ENCODE measurements at regions of chr5 and their contacts with region 1.

Region 1: DNA sequence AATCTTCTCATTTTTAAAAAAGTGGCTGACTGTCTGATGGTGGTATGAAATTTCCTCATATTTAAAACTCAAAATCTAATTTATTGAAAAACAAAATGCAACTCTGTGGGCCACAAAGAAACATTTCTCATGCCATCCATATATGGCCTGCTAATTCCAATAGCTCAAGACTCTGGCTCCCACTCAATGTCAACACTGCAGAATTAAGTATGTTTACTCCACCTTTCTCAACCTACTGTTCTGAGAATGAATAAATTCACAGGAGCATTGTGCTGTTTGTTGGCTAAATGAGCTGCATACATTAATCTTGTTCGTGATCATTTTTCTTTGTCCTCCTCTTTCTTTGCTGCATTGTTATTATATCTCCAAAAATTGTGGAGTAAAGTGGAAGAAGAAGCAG is 79.5 kb upstream of the GABRG2 start:
- DNase-seq: no peak
- H3K4me3 ChIP-seq: no peak overlapping the region
- H3K27ac ChIP-seq: no peak overlapping the region
- H3K4me1 ChIP-seq: no peaks in the 10 kb centered on the region
- CTCF ChIP-seq: no peak

Region 2: DNA sequence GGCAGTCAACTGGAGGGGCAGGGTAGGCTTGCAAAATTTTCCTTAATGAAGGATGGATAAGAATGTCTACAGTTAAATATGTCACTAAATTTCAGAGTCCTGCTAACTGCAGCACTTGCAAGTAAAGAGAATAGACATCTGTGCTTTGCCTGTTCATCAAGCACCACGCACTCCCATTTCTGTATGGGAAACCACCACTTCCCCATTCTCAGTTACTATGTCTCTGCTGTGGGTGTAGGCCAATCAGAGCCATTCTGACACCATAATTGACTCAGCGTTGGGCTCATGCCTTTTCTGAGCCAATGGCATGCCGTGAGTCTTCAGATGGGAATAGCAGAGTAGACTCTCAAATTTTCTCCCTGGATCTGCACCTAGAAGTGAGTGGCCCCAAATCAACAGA is 689.0 kb before region 1 on chr5:
- CTCF ChIA-PET with region 1: no interaction called
- POLR2A ChIA-PET with region 1: no interaction called
- intact Hi-C with region 1: no loop called
- DNase-seq: no peak
- H3K4me3 ChIP-seq: no peak overlapping the region
- H3K27ac ChIP-seq: no peak overlapping the region
- H3K4me1 ChIP-seq: no peaks in the 10 kb centered on the region
- CTCF ChIP-seq: no peak

Region 3: DNA sequence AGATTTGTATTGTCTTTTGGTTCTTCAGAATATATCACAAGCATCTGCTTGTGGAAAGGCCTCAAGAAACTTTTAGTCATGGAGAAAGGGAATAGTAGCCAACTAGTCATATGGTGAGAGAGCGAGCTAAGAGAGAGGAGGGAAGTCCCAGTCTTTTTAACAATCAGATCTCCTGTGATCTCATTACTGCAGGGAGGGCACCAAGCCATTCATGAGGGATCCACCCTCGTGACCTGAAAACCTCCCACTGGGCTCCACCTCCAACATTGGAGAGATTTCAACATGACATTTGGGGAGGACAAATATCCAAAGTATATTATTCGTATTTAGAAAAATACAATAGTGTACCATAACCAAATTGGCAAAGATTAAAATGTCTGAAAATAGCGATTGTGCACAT is 41.2 kb before region 1 on chr5:
- CTCF ChIA-PET with region 1: no interaction called
- POLR2A ChIA-PET with region 1: no interaction called
- intact Hi-C with region 1: no loop called
- DNase-seq: no peak
- H3K4me3 ChIP-seq: no peak overlapping the region
- H3K27ac ChIP-seq: no peak overlapping the region
- H3K4me1 ChIP-seq: no peaks in the 10 kb centered on the region
- CTCF ChIP-seq: no peak

Region 4: DNA sequence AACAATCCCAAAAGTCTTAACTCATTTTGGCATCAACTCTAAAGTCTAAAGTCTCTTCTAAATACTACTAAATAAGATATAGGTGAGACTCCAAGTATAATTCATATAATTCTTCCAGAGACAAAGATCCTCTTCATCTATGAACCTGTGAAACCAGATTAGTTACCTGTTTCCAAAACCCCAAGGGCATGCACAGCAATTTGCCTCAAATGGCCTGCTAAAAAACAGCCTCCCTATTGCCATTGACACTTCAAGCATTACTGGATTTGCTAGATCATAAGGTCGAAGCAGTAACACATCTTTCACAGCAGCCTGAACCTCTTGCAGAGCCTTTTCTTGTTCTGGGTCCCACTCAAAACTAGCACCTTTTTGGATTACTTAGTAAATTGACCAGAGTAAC is 59.2 kb after region 1 on chr5:
- CTCF ChIA-PET with region 1: no interaction called
- POLR2A ChIA-PET with region 1: no interaction called
- intact Hi-C with region 1: loop called (anchors 2 kb)
- DNase-seq: no peak
- H3K4me3 ChIP-seq: no peak overlapping the region
- H3K27ac ChIP-seq: no peak overlapping the region
- H3K4me1 ChIP-seq: no peaks in the 10 kb centered on the region
- CTCF ChIP-seq: no peak

Region 5: GRCh38 chr5:162119801-162120200 is 131.7 kb after region 1 on chr5:
- CTCF ChIA-PET with region 1: no interaction called
- POLR2A ChIA-PET with region 1: no interaction called
- intact Hi-C with region 1: no loop called
- DNase-seq: no peak
- H3K4me3 ChIP-seq: no peak overlapping the region
- H3K27ac ChIP-seq: no peak overlapping the region
- H3K4me1 ChIP-seq: no peaks in the 10 kb centered on the region
- CTCF ChIP-seq: no peak

Measured in OCI-LY7 (cell line).